ENCODE measurements at regions of chr2 and their contacts with region 1.

Region 1: GRCh38 chr2:134718817-134719814 is at the start of gene TMEM163:
- DNase-seq: peak; percentile 76
- ATAC-seq: peak; percentile 83
- H3K4me3 ChIP-seq: peak within 1 kb of the TSS in 4 of 5 experiments; percentile 43 to 60 (median 55)
- H3K4me3 Mint-ChIP-seq: peak within 1 kb of the TSS; percentile 87
- H3K27ac ChIP-seq: no peak within 1 kb of the TSS
- H3K27ac Mint-ChIP-seq: peak within 1 kb of the TSS; percentile 21
- H3K4me1 ChIP-seq: peaks cover 16 to 21% of the 10 kb centered on the region in 2 donors
- H3K4me1 Mint-ChIP-seq: peaks cover 35% of the 10 kb centered on the region
- H3K27me3 ChIP-seq: peaks cover 0 to 39% (median 15%) of the 10 kb centered on the region in 4 experiments
- H3K27me3 Mint-ChIP-seq: peaks cover 27% of the 10 kb centered on the region
- CTCF ChIP-seq: no peak
- total RNA-seq, gene TMEM163: 5.6 and 6.2 TPM in 2 replicates

Region 2: GRCh38 chr2:134758633-134759032 is 39.5 kb after region 1 on chr2:
- CTCF ChIA-PET with region 1: no interaction called
- POLR2A ChIA-PET with region 1: no interaction called
- intact Hi-C with region 1: loop called (anchors 2 kb)
- DNase-seq: peak; percentile 84
- ATAC-seq: peak; percentile 96
- H3K4me3 ChIP-seq: peak overlapping the region in 1 of 5 experiments; percentile 10
- H3K4me3 Mint-ChIP-seq: peak overlapping the region; percentile 59
- H3K27ac ChIP-seq: no peak overlapping the region
- H3K27ac Mint-ChIP-seq: peak overlapping the region; percentile 73
- H3K4me1 ChIP-seq: peaks cover 18 to 22% of the 10 kb centered on the region in 2 donors
- H3K4me1 Mint-ChIP-seq: peaks cover 26% of the 10 kb centered on the region
- H3K27me3 ChIP-seq: no peaks in the 10 kb centered on the region
- H3K27me3 Mint-ChIP-seq: peaks cover 3% of the 10 kb centered on the region
- CTCF ChIP-seq: no peak

Region 3: DNA sequence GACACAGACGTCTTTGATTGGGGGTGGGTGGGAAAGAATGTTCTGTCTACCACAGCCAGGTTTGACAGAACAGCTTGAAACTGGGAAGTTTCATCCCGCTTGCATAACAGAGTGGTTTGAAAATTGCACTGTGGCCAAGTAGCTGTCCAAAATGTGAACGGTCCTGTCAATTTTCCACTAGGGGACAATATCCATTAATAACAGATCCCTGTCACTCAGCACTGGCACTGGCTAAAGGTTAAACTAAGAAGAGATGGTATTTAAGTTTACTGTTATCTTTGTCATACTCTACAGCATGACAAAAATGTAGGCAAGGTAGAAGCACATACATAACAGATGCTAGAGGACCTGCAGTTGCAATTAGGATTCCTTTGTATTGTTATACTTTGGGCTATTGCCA is 63.7 kb after region 1 on chr2:
- CTCF ChIA-PET with region 1: interaction called, 3 read pairs
- POLR2A ChIA-PET with region 1: no interaction called
- intact Hi-C with region 1: loop called (anchors 5 kb)
- DNase-seq: peak; percentile 59
- ATAC-seq: peak; percentile 47
- H3K4me3 ChIP-seq: no peak overlapping the region
- H3K4me3 Mint-ChIP-seq: no peak overlapping the region
- H3K27ac ChIP-seq: no peak overlapping the region
- H3K27ac Mint-ChIP-seq: no peak overlapping the region
- H3K4me1 ChIP-seq: no peaks in the 10 kb centered on the region
- H3K4me1 Mint-ChIP-seq: peaks cover 8% of the 10 kb centered on the region
- H3K27me3 ChIP-seq: peaks cover 0 to 4% (median 0%) of the 10 kb centered on the region in 4 experiments
- H3K27me3 Mint-ChIP-seq: peaks cover 4% of the 10 kb centered on the region
- CTCF ChIP-seq: peak; percentile 65

Measured in B cell (primary cell).